HepG2 (cell line): ENCODE measurements at regions of chr4 and their contacts with region 1.

Region 1: DNA sequence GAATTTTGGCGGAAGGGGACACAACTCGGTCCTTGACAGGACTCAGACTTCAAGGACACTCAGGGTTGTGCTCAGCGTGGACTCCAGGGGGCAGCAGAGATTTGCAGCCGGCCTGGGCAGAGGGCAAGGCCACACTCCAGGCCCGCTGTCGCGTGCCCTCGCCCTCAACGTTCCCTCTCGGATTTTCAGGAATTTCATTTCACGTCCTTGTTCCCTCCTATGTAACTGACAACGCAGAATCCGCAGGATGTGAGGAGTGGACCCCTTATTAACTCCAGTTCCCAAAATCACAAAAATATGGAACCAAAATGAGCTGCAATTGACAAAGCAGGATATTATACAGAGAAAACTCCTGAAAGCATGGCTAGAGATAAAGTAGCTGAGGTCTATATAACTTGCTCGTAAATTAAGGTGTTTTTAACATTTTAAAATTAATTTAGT is 21.0 kb upstream of the DCTD start:
- DNase-seq: peak; percentile 47
- ATAC-seq: peak; percentile 99
- H3K4me3 ChIP-seq: peak overlapping the region in 1 of 3 experiments; percentile 48; a peak in 2 of 6 replicates
- H3K27ac ChIP-seq: no peak overlapping the region
- H3K4me1 ChIP-seq: no peaks in the 10 kb centered on the region
- H3K27me3 ChIP-seq: peaks cover 0 to 3% of the 10 kb centered on the region in 2 experiments; a peak in 1 of 5 replicates
- CTCF ChIP-seq: peak; percentile 96
- EP300 ChIP-seq: no peak
- POLR2A ChIP-seq: no peak
- RAD21 ChIP-seq: peak; percentile 89

Region 2: DNA sequence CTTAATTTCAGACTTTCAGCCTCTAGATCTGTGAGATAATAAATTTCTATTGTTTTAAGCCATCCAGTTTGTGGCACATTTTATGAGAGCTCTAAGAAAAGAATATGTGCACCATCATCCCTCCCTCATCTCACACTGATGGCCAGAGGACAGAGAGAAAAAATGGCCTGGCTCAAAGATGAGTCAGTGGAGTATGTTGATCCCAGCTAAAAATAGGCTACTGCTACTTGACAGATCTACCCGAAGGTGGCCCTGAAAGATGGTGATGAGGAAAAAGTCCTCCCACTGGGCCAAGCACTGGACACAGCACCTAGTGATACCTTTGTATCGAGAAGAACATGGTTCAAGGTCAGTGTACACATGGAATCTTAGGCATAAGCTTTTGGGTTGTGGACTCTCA is 17.2 kb after region 1 on chr4:
- CTCF ChIA-PET with region 1: no interaction called
- POLR2A ChIA-PET with region 1: no interaction called
- in situ Hi-C with region 1: no loop called
- intact Hi-C with region 1: no loop called
- DNase-seq: no peak
- ATAC-seq: no peak
- H3K4me3 ChIP-seq: no peak overlapping the region
- H3K27ac ChIP-seq: no peak overlapping the region
- H3K4me1 ChIP-seq: no peaks in the 10 kb centered on the region
- H3K27me3 ChIP-seq: peaks cover 0 to 3% of the 10 kb centered on the region in 2 experiments; a peak in 2 of 5 replicates
- CTCF ChIP-seq: no peak
- EP300 ChIP-seq: no peak
- POLR2A ChIP-seq: no peak
- RAD21 ChIP-seq: no peak

Region 3: DNA sequence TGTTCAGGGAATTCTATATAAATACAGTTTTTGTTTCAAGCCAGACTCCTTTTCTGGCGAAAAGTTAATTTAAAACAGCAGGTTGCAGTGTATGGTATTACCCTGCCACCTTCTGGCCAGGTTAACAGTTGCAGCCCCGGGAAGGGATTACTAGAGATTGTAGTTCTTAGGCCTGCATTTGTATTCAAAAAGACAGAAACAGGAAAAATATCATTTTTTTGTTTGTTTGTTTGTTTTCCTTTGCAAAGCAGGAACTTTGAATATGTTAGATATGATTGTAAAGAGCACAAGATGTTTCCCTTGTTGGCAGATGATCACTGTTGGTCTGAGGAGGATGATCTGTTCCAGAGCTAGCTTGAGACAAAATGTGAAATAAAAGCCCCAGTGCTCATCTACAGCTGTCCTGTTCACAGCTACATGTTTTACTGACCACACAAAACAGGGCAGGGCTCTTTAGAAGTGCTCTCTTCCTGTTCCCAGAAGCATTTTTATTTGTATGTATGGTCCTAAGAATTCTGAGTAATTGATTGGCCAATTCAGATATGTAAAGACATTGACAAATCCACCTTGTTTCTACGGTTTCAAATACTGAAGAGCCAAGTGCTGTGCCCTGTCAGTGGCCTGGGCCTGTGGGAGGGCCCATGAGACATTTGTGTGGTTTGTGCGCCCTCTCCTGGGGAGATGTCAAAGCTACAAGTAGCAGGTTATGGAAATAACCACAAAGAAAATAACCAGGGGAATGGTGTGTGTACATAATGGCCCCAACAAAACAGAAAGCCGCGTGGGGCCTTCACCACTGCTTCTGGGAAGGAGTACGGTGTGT is 323.9 kb after region 1 on chr4:
- CTCF ChIA-PET with region 1: interaction called, 48 read pairs
- POLR2A ChIA-PET with region 1: no interaction called
- in situ Hi-C with region 1: loop called (anchors 5 kb)
- intact Hi-C with region 1: loop called (anchors 1 kb)
- DNase-seq: peak; percentile 76
- ATAC-seq: peak; percentile 89
- H3K4me3 ChIP-seq: no peak overlapping the region
- H3K27ac ChIP-seq: peak overlapping the region; percentile 13
- H3K4me1 ChIP-seq: peaks cover 30% of the 10 kb centered on the region
- H3K27me3 ChIP-seq: no peaks in the 10 kb centered on the region
- CTCF ChIP-seq: peak; percentile 89
- EP300 ChIP-seq: 0 out of 4 replicates have a peak, but pooled peaks of 1 of the 2 experiments have one; percentile 10
- POLR2A ChIP-seq: no peak
- RAD21 ChIP-seq: peak; percentile 82

Region 4: GRCh38 chr4:183398227-183399125 is 460.3 kb after region 1 on chr4:
- CTCF ChIA-PET with region 1: no interaction called
- POLR2A ChIA-PET with region 1: no interaction called
- in situ Hi-C with region 1: loop called (anchors 10 kb)
- intact Hi-C with region 1: no loop called
- DNase-seq: peak; percentile 51
- ATAC-seq: peak; percentile 97
- H3K4me3 ChIP-seq: peak overlapping the region; percentile 38 to 71 (median 50)
- H3K27ac ChIP-seq: no peak overlapping the region
- H3K4me1 ChIP-seq: peaks cover 17% of the 10 kb centered on the region
- H3K27me3 ChIP-seq: peaks cover 4 to 32% of the 10 kb centered on the region in 2 experiments; a peak in 4 of 5 replicates
- CTCF ChIP-seq: peak; percentile 76
- EP300 ChIP-seq: no peak
- POLR2A ChIP-seq: no peak
- RAD21 ChIP-seq: peak; percentile 62; the same call in 1 of the 2 replicates

Region 5: GRCh38 chr4:183407128-183407585 is 468.9 kb after region 1 on chr4:
- CTCF ChIA-PET with region 1: interaction called, 7 read pairs
- POLR2A ChIA-PET with region 1: no interaction called
- in situ Hi-C with region 1: no loop called
- intact Hi-C with region 1: loop called (anchors 1 kb)
- DNase-seq: peak; percentile 60
- ATAC-seq: peak; percentile 87
- H3K4me3 ChIP-seq: peak overlapping the region; percentile 34 to 63 (median 57); a peak in 5 of 6 replicates
- H3K27ac ChIP-seq: no peak overlapping the region
- H3K4me1 ChIP-seq: peaks cover 42% of the 10 kb centered on the region
- H3K27me3 ChIP-seq: peaks cover 1 to 10% of the 10 kb centered on the region in 2 experiments; a peak in 2 of 5 replicates
- CTCF ChIP-seq: peak; percentile 96
- EP300 ChIP-seq: no peak
- POLR2A ChIP-seq: no peak
- RAD21 ChIP-seq: peak; percentile 90